ENCODE measurements at regions of chr7 and their contacts with region 1.

Region 1: DNA sequence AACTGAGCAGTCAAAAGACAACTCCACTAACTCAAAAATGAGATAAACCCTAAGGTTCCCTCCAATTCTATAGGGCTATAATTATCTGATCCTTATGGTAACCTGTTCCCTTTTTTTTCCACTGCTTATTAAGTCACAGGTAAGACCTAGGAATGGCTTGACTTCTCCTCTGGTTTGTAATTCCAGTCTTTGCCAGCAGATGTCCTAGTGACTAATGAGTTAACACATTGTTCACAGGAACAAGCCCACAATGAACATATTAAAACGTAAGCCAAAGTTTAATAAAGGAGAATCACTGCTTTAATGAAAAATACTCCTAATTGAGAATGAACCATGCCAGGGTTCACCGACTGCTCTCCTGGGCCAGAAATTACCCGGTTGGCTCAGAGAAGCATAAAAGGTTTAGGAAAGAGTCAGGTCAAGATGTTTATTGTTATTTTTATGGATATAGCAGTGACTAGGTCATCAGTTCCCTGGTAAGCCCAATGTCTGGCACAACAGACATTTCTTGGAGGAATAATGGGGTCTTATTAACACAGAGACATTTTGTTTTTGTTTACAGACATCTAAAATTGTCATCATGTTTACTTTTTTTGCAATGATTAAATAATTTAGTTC is 120.1 kb downstream of the ELAPOR2 start:
- DNase-seq: peak in 9 of 14 experiments; percentile 9 to 75 (median 30)
- ATAC-seq: peak; percentile 71
- H3K4me3 ChIP-seq: no peak overlapping the region
- H3K4me3 Mint-ChIP-seq: no peak overlapping the region
- H3K27ac ChIP-seq: no peak overlapping the region
- H3K27ac Mint-ChIP-seq: no peak overlapping the region
- H3K4me1 ChIP-seq: no peaks in the 10 kb centered on the region
- H3K4me1 Mint-ChIP-seq: no peaks in the 10 kb centered on the region
- H3K27me3 ChIP-seq: no peaks in the 10 kb centered on the region
- H3K27me3 Mint-ChIP-seq: peaks cover 9% of the 10 kb centered on the region
- CTCF ChIP-seq: peak; percentile 69

Region 2: DNA sequence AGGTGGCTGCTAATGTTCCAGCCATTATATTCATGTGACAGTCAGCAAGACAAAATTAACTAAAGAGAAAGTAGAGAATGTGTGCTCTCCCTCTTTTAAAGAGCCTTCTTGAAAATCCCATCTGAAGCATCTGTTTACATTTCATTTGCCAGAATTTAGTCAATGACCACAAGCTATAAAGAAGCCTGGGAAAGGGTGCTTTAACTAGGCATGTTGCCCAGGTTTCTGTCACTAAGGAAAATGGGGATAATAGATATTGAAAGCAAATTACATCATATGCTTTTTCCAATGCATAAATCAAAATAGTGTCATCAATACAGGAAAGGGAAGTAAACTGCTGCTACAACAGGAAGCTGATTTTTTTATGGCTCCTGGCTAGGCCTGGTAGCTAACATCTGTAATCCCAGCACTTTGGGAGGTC is 52.5 kb after region 1 on chr7:
- CTCF ChIA-PET with region 1: interaction called, 3 read pairs
- POLR2A ChIA-PET with region 1: no interaction called
- intact Hi-C with region 1: loop called (anchors 2 to 5 kb)
- DNase-seq: no peak
- ATAC-seq: no peak
- H3K4me3 ChIP-seq: no peak overlapping the region
- H3K4me3 Mint-ChIP-seq: no peak overlapping the region
- H3K27ac ChIP-seq: no peak overlapping the region
- H3K27ac Mint-ChIP-seq: no peak overlapping the region
- H3K4me1 ChIP-seq: no peaks in the 10 kb centered on the region
- H3K4me1 Mint-ChIP-seq: peaks cover 6% of the 10 kb centered on the region
- H3K27me3 ChIP-seq: no peaks in the 10 kb centered on the region
- H3K27me3 Mint-ChIP-seq: peaks cover 7% of the 10 kb centered on the region
- CTCF ChIP-seq: no peak

Region 3: GRCh38 chr7:87739306-87739705 is 800.0 kb after region 1 on chr7:
- CTCF ChIA-PET with region 1: no interaction called
- POLR2A ChIA-PET with region 1: no interaction called
- intact Hi-C with region 1: no loop called
- DNase-seq: no peak
- ATAC-seq: no peak
- H3K4me3 ChIP-seq: no peak overlapping the region
- H3K4me3 Mint-ChIP-seq: no peak overlapping the region
- H3K27ac ChIP-seq: no peak overlapping the region
- H3K27ac Mint-ChIP-seq: no peak overlapping the region
- H3K4me1 ChIP-seq: no peaks in the 10 kb centered on the region
- H3K4me1 Mint-ChIP-seq: no peaks in the 10 kb centered on the region
- H3K27me3 ChIP-seq: no peaks in the 10 kb centered on the region
- H3K27me3 Mint-ChIP-seq: no peaks in the 10 kb centered on the region
- CTCF ChIP-seq: no peak